CD8-positive, alpha-beta T cell (primary cell): ENCODE measurements at regions of chr1 and their contacts with region 1.

Region 1: DNA sequence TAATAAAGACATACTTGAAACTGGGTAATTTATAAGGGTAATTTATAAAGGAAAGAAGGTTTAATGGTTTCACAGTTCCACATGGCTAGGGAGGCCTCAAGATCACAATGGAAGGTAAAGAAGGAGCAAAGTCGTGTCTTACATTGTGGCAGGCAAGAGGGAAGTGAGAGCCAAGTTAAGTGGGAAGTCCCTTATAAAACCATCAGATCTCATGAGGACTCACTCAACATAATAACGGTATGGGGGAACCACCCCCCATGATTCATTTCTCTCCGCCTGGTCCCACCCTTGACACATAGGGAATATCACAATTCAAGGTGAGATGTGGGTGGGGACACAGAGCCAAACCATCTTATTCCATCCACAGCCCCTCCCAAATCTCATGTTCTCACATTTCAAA is 76.8 kb upstream of the ZNF678 start:
- DNase-seq: no peak
- ATAC-seq: no peak
- H3K4me3 ChIP-seq: no peak overlapping the region
- H3K4me3 Mint-ChIP-seq: no peak overlapping the region
- H3K27ac ChIP-seq: no peak overlapping the region
- H3K27ac Mint-ChIP-seq: no peak overlapping the region
- H3K4me1 ChIP-seq: no peaks in the 10 kb centered on the region
- H3K4me1 Mint-ChIP-seq: no peaks in the 10 kb centered on the region
- H3K27me3 ChIP-seq: no peaks in the 10 kb centered on the region
- H3K27me3 Mint-ChIP-seq: peaks cover 1% of the 10 kb centered on the region
- CTCF ChIP-seq: no peak

Region 2: DNA sequence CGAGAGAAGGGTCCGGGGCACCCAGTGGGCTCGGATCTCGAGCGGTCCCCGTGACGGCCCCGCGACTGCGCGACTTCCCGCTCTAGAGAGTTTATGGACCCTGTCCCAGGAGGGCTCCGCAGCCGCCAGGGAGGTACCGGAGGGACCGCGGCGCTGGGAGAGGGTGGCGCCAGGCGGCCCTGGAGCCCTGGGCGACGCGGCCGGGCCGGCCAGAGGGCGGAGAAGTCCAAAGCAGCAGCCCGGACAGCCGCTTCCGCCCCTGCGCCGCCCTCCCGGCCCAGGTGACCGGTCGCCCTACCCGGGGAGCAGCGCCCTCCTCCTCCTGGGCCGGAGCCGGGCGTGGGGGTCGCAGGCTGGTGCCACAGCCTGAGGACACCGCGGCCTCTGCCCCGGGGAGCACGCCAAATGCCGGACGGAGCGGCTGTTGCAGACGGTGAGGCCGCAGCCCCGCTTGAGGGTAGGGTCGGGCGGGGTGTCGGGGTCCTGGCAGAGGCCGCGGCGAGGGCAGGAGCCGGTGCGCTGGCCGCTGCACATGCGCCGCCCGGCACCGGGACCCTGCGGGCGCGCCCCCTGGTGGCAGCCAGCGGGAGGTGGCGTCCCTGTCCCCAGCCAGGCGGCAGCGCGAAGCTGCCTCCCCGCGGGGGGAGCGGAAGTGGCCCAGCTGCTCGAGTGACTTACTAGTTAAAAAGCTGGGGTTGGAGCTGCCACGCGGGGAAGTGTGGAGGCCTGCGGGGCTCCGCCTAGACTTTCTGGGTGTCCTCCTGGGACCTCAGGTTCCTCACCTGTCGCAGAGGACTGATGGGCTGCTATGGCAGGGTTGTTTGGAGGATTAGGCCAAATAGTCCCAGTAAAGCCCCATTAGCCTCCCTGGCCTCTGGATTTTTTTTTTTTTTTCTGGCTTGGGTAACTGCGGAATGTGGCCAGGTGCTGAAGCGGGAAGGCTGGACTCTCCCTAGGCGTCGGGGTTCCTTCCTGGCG is 55.9 kb after region 1 on chr1:
- CTCF ChIA-PET with region 1: no interaction called
- POLR2A ChIA-PET with region 1: no interaction called
- intact Hi-C with region 1: loop called (anchors 1 to 2 kb)
- DNase-seq: peak; percentile 74 to 94 (median 90)
- ATAC-seq: peak; percentile 98
- H3K4me3 ChIP-seq: peak overlapping the region; percentile 43 to 61
- H3K4me3 Mint-ChIP-seq: peak overlapping the region; percentile 64
- H3K27ac ChIP-seq: peak overlapping the region in 1 of 2 experiments; percentile 57
- H3K27ac Mint-ChIP-seq: no peak overlapping the region
- H3K4me1 ChIP-seq: peaks cover 11% of the 10 kb centered on the region
- H3K4me1 Mint-ChIP-seq: peaks cover 5% of the 10 kb centered on the region
- H3K27me3 ChIP-seq: no peaks in the 10 kb centered on the region
- H3K27me3 Mint-ChIP-seq: no peaks in the 10 kb centered on the region
- CTCF ChIP-seq: peak; percentile 93

Region 3: DNA sequence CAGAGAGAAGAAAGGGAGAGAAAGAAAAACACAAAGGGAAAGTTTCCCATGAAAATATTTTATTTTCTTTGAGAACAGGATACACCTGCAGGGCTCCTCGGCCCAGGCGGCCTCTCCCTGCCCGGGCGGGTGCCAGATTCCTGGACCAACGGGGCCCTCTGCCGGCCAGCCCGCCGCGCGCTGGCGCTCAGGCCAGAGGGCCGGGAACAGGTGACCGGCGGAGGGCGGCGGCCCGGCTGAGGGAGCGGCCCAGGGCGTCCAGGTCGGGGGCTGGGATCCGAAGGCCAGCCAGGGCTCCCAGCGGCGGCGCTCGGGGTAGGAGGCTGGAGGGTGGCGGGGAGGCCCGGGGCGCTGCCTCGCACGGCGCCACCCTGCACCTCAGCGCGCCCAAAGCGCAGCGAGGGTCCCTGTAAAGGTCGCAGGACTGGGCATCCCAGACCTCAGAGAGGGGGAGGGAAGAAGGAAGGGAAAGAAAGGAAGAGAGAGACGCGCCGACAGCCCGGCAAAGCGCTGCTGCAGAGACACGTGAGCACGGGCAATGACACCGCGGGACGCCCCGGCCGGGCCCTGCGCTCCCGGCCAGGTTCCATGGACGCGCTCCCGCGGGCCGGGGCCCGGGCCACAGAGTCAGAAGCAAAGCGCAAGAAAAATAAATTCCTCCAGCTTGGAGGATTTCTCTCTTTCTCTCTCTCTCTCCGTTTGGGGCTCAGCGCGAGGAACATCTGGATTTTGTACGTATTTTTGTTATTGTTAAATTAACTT is 460.2 kb after region 1 on chr1:
- CTCF ChIA-PET with region 1: interaction called, 13 read pairs
- POLR2A ChIA-PET with region 1: no interaction called
- intact Hi-C with region 1: loop called in 1 of 2 experiments (anchors 2 kb)
- DNase-seq: peak in 8 of 9 experiments; percentile 45 to 82 (median 60)
- ATAC-seq: peak; percentile 64
- H3K4me3 ChIP-seq: peak overlapping the region; percentile 13 to 31
- H3K4me3 Mint-ChIP-seq: peak overlapping the region; percentile 74
- H3K27ac ChIP-seq: no peak overlapping the region
- H3K27ac Mint-ChIP-seq: no peak overlapping the region
- H3K4me1 ChIP-seq: peaks cover 19% of the 10 kb centered on the region
- H3K4me1 Mint-ChIP-seq: peaks cover 13% of the 10 kb centered on the region
- H3K27me3 ChIP-seq: peaks cover 14% of the 10 kb centered on the region in 2 experiments
- H3K27me3 Mint-ChIP-seq: peaks cover 16% of the 10 kb centered on the region
- CTCF ChIP-seq: peak; percentile 56

Region 4: DNA sequence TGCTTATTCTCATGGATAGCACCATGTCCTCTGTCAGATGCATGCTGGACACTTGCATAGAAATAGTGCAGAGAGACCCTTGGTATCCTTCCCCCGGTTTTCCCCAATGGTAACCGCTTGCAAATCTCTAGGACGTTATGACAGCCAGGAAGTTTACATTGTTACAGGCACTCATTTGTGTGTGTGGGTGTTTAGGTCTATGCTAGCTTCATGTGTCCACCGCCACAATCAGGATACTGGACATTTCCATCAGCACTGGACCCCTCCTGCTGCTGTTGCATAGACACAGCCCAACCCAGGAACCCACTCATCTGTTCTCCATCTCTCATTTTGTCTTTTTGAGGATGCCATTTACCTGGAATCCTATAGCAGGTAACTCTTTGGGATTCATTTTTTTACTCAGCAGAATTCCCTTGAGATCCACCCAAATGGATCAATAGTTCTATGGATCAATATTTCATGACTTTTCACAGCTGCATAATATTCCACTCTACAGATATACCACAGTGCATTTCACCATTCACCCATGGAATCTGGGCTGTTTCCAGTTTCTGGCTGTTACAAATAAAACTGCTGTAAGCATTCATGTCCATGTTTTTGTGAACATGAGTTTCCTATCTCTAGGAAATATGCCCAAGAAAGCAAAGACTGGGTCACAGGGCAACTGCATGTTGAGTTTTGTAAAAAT is 467.7 kb after region 1 on chr1:
- CTCF ChIA-PET with region 1: interaction called, 18 read pairs
- POLR2A ChIA-PET with region 1: no interaction called
- intact Hi-C with region 1: loop called (anchors 1 to 2 kb)
- DNase-seq: no peak
- ATAC-seq: peak; percentile 13
- H3K4me3 ChIP-seq: no peak overlapping the region
- H3K4me3 Mint-ChIP-seq: no peak overlapping the region
- H3K27ac ChIP-seq: no peak overlapping the region
- H3K27ac Mint-ChIP-seq: no peak overlapping the region
- H3K4me1 ChIP-seq: no peaks in the 10 kb centered on the region
- H3K4me1 Mint-ChIP-seq: peaks cover 2% of the 10 kb centered on the region
- H3K27me3 ChIP-seq: peaks cover 3 to 5% of the 10 kb centered on the region in 2 experiments
- H3K27me3 Mint-ChIP-seq: peaks cover 34% of the 10 kb centered on the region
- CTCF ChIP-seq: no peak

Region 5: GRCh38 chr1:228515200-228515834 is 1028.8 kb after region 1 on chr1:
- CTCF ChIA-PET with region 1: no interaction called
- POLR2A ChIA-PET with region 1: no interaction called
- intact Hi-C with region 1: loop called (anchors 2 to 5 kb)
- DNase-seq: peak in 7 of 9 experiments; percentile 7 to 76 (median 33)
- ATAC-seq: peak; percentile 52
- H3K4me3 ChIP-seq: no peak overlapping the region
- H3K4me3 Mint-ChIP-seq: no peak overlapping the region
- H3K27ac ChIP-seq: no peak overlapping the region
- H3K27ac Mint-ChIP-seq: no peak overlapping the region
- H3K4me1 ChIP-seq: peaks cover 11% of the 10 kb centered on the region
- H3K4me1 Mint-ChIP-seq: peaks cover 15% of the 10 kb centered on the region
- H3K27me3 ChIP-seq: no peaks in the 10 kb centered on the region
- H3K27me3 Mint-ChIP-seq: peaks cover 10% of the 10 kb centered on the region
- CTCF ChIP-seq: peak; percentile 93